ENCODE measurements at regions of chr2 and their contacts with region 1.

Region 1: DNA sequence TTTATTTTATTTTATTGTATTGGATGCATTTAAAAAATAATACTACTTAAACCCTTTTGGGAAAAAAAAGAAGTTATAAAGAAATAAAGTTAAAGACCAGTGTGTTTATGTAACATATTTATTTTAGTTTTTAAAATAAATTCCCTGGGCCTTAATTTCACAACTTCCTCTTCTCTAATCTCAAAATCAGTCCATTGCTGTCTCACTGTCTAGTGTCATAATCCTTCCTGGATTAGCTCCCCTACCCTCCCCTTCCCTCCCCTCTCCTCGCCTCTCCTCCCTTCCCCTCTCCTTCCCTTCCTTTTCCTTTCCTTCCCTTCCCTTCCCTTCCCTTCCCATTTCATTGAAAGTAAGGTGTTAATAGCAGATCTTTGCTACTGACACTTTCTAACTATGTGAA is 40.3 kb upstream of the ZEB2 start:
- DNase-seq: no peak
- H3K4me3 ChIP-seq: no peak overlapping the region
- H3K27ac ChIP-seq: no peak overlapping the region
- H3K4me1 ChIP-seq: peaks cover 31% of the 10 kb centered on the region
- CTCF ChIP-seq: no peak

Region 2: GRCh38 chr2:144596073-144596871 is 36.0 kb after region 1 on chr2:
- CTCF ChIA-PET with region 1: no interaction called
- POLR2A ChIA-PET with region 1: interaction called, 3 read pairs
- intact Hi-C with region 1: loop called (anchors 5 kb)
- DNase-seq: peak; percentile 74
- H3K4me3 ChIP-seq: peak overlapping the region; percentile 59
- H3K27ac ChIP-seq: peak overlapping the region; percentile 57
- H3K4me1 ChIP-seq: peaks cover 37% of the 10 kb centered on the region
- CTCF ChIP-seq: no peak